Activated CD8-positive, alpha-beta T cell treated with anti-CD3 and anti-CD28 coated beads, Interleukin-2, amount 10 ng/mL, durations not matched to agents 7 days and 5 days (primary cell): ENCODE measurements at regions of chr1 and their contacts with region 1.

Region 1: DNA sequence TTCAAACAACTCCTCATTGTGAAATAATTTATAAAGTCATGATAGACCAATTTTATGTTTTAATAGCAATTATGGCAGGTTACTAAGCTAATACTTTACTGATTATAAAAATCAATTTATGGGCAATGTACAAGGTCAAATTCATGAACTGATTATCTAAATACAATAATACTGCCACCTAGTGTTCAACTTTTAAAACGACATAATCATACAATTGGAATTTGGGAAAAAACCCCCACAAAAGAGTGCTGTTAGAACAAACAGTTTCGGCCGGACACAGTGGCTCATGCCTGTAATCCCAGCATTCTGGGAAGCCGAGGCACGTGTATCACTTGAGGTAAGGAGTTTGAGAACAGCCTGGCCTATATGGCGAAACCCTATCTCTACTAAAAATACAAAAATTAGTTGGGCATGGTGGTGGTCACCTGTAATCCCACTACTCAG is 14.0 kb downstream of the GTF2B start:
- DNase-seq: no peak
- ATAC-seq: no peak
- H3K4me3 Mint-ChIP-seq: no peak overlapping the region
- H3K27ac Mint-ChIP-seq: no peak overlapping the region
- H3K4me1 Mint-ChIP-seq: peaks cover 14% of the 10 kb centered on the region
- H3K27me3 Mint-ChIP-seq: no peaks in the 10 kb centered on the region

Region 2: DNA sequence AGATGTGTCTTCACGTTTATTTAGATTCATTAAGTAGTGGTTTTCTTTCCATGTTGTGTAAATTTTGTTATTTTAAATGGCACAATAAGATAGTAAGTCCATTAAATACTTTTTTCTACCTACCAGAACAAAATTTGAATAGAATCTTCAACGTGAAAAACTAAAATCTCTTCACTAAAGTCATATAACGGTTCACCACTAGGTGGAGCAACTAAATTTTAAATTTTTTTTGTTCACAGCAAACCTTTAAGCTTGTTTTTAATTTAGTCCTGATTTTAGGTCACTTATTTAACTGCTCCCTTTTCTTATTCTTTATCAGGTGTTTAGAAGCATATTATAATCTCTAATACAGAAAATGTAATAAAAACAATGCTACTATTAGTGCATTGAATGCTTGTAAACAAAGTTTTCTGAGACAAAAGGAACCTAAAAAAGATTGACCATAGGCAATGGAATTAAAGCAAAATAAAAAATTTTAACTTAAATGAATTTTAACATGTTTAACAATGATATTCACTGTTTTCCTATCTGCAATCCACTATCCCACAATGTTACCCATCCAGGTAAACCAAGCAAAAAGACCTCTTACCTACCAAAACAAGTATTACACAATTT is 221.6 kb before region 1 on chr1:
- CTCF ChIA-PET with region 1: interaction called, 63 read pairs
- POLR2A ChIA-PET with region 1: no interaction called
- DNase-seq: no peak
- ATAC-seq: no peak
- H3K4me3 Mint-ChIP-seq: no peak overlapping the region
- H3K27ac Mint-ChIP-seq: no peak overlapping the region
- H3K4me1 Mint-ChIP-seq: peaks cover 12% of the 10 kb centered on the region
- H3K27me3 Mint-ChIP-seq: peaks cover 2% of the 10 kb centered on the region

Region 3: GRCh38 chr1:88736639-88737248 is 140.7 kb before region 1 on chr1:
- CTCF ChIA-PET with region 1: interaction called, 10 read pairs
- POLR2A ChIA-PET with region 1: no interaction called
- DNase-seq: peak; percentile 44
- ATAC-seq: peak; percentile 51
- H3K4me3 Mint-ChIP-seq: no peak overlapping the region
- H3K27ac Mint-ChIP-seq: no peak overlapping the region
- H3K4me1 Mint-ChIP-seq: peaks cover 7% of the 10 kb centered on the region
- H3K27me3 Mint-ChIP-seq: no peaks in the 10 kb centered on the region

Region 4: DNA sequence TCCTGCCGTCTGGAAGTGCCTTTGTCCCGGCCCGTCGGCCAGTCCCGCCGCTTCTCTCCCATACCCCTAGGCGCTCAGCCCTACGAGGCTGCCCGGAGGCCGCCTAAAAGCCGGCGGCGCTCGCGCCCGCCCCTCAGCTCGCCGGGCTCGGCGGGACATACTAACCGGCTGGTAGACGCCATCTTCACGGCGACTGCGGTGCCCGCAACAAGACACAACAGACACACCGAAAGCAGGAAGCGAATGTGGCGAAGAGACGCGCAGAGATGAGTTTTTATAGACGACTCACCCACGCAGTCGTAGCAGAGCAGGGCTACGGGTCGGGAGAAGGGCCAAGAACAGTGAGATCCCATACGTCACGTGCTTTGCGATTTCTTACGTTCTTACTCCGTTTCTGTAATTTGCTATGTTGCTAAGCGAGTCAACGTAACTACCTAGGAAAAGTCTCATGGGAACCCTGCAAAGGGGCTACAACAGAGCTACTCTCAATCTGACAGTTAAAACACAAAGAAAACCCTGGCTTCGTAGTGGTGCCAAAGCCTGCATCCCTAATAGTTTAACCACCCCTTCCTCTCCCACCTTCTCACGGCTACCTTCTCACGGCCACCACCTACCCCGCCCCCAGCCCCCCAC is 14.0 kb after region 1 on chr1 and contains the start of gene GTF2B:
- CTCF ChIA-PET with region 1: interaction called, 65 read pairs
- POLR2A ChIA-PET with region 1: interaction called, 5 read pairs
- DNase-seq: peak; percentile 97
- ATAC-seq: peak; percentile 86
- H3K4me3 Mint-ChIP-seq: peak within 1 kb of the TSS; percentile 90
- H3K27ac Mint-ChIP-seq: peak within 1 kb of the TSS; percentile 90
- H3K4me1 Mint-ChIP-seq: peaks cover 43% of the 10 kb centered on the region
- H3K27me3 Mint-ChIP-seq: no peaks in the 10 kb centered on the region
- total RNA-seq, gene GTF2B: 36.5 to 38.8 TPM

Region 5: GRCh38 chr1:89069951-89070350 is 192.5 kb after region 1 on chr1:
- CTCF ChIA-PET with region 1: no interaction called
- POLR2A ChIA-PET with region 1: no interaction called
- DNase-seq: no peak
- ATAC-seq: no peak
- H3K4me3 Mint-ChIP-seq: peak overlapping the region; percentile 76
- H3K27ac Mint-ChIP-seq: peak overlapping the region; percentile 86
- H3K4me1 Mint-ChIP-seq: peaks cover 31% of the 10 kb centered on the region
- H3K27me3 Mint-ChIP-seq: no peaks in the 10 kb centered on the region

Region 6: GRCh38 chr1:89190017-89190416 is 312.6 kb after region 1 on chr1:
- CTCF ChIA-PET with region 1: no interaction called
- POLR2A ChIA-PET with region 1: no interaction called
- DNase-seq: no peak
- ATAC-seq: no peak
- H3K4me3 Mint-ChIP-seq: no peak overlapping the region
- H3K27ac Mint-ChIP-seq: no peak overlapping the region
- H3K4me1 Mint-ChIP-seq: peaks cover 21% of the 10 kb centered on the region
- H3K27me3 Mint-ChIP-seq: no peaks in the 10 kb centered on the region